ENCODE measurements at regions of chr15 and their contacts with region 1.

Region 1: DNA sequence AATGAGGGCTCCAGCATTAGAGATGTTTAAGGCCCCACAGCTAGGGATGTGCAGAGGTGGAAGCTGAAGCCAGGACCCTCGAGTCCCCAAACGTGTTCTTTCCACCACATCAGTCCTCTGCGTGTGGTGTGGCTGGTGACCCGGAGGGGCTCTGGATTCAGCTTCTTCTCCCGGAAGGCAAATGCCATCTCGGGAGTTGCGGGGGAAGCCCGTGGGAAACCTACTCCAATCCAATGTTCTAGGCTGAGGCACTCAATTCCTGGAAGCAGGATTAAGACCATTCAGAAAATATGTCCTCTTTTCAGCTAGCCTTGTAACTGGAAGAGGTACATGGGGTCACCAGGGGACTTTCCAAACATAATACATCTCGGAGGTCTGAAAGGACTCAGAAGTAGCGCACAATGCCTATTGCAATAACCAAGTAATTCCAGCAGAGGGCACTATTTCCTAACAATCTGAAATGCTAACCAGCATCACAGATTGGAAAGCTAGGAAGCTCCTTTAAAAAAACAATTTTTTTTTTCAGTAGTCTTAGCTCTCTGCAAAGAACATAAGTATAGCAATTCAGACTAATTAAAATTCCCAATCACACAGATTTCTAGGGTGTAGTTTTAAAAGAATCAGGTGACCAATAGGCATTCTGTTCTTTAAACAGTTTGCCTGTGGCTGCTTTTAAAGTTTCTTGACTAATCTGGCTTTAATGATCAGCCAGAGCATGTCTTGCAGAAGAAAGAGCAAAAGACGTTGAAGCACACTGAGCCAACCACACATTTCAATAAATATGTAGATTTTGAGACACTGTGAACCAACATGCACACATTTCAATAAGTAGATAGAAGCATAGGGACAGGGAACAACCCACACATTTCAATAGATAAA is 36.1 kb downstream of the BNC1 start:
- DNase-seq: peak; percentile 24
- H3K4me3 Mint-ChIP-seq: no peak overlapping the region
- H3K27ac Mint-ChIP-seq: no peak overlapping the region
- H3K4me1 Mint-ChIP-seq: no peaks in the 10 kb centered on the region
- H3K27me3 Mint-ChIP-seq: peaks cover 46% of the 10 kb centered on the region

Region 2: DNA sequence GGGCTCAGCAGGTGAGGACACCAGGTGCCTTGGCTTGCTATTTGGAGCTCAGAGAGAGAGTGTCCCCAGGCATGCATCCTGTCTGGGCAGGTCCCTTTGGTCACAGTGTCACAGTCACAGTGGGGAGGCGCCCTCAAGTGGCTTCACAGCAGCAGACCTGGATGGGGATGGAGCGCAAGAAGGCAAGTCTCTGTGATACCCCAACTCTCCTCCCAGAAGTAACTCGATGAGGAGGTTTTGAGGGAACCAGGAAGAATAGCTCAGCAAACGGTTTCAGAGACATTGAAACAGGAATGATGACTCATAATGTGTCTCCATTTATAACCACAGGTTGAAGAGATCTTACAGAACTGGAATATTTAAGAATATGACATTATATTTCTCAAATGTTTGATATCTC is 132.3 kb after region 1 on chr15:
- CTCF ChIA-PET with region 1: interaction called, 3 read pairs
- intact Hi-C with region 1: loop called (anchors 1 kb)
- DNase-seq: peak; percentile 74
- H3K4me3 Mint-ChIP-seq: no peak overlapping the region
- H3K27ac Mint-ChIP-seq: no peak overlapping the region
- H3K4me1 Mint-ChIP-seq: no peaks in the 10 kb centered on the region
- H3K27me3 Mint-ChIP-seq: peaks cover 45% of the 10 kb centered on the region

Region 3: GRCh38 chr15:83436458-83437158 is 188.2 kb after region 1 on chr15:
- CTCF ChIA-PET with region 1: interaction called, 7 read pairs
- intact Hi-C with region 1: loop called (anchors 1 kb)
- DNase-seq: no peak
- H3K4me3 Mint-ChIP-seq: no peak overlapping the region
- H3K27ac Mint-ChIP-seq: no peak overlapping the region
- H3K4me1 Mint-ChIP-seq: peaks cover 5% of the 10 kb centered on the region
- H3K27me3 Mint-ChIP-seq: peaks cover 7% of the 10 kb centered on the region

Region 4: GRCh38 chr15:83559310-83559966 is 311.0 kb after region 1 on chr15:
- CTCF ChIA-PET with region 1: interaction called, 40 read pairs
- intact Hi-C with region 1: loop called (anchors 1 kb)
- DNase-seq: peak; percentile 69
- H3K4me3 Mint-ChIP-seq: no peak overlapping the region
- H3K27ac Mint-ChIP-seq: no peak overlapping the region
- H3K4me1 Mint-ChIP-seq: no peaks in the 10 kb centered on the region
- H3K27me3 Mint-ChIP-seq: peaks cover 10% of the 10 kb centered on the region

Region 5: DNA sequence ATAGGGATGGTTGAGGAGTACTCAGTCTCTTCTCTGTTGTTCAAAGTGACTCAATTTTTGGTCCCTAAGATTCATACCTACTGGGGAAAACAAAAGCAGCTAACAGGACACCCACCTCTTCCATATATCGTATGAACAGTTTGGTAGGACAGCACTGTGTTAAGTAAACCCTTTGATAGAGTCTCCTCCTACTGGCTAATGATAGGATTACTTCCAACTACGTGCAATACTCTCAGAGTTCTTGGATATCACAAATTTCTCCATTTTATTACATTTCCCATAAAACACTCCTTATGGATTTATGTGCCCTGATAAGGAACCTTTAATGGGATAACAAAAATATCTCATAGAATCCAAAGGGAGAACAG is 787.0 kb after region 1 on chr15:
- CTCF ChIA-PET with region 1: no interaction called
- intact Hi-C with region 1: loop called (anchors 10 kb)
- DNase-seq: no peak
- H3K4me3 Mint-ChIP-seq: no peak overlapping the region
- H3K27ac Mint-ChIP-seq: no peak overlapping the region
- H3K4me1 Mint-ChIP-seq: no peaks in the 10 kb centered on the region
- H3K27me3 Mint-ChIP-seq: peaks cover 24% of the 10 kb centered on the region